Dorsolateral prefrontal cortex (tissue), 120 donors: ENCODE measurements at regions of chrX and their contacts with region 1.

Region 1: DNA sequence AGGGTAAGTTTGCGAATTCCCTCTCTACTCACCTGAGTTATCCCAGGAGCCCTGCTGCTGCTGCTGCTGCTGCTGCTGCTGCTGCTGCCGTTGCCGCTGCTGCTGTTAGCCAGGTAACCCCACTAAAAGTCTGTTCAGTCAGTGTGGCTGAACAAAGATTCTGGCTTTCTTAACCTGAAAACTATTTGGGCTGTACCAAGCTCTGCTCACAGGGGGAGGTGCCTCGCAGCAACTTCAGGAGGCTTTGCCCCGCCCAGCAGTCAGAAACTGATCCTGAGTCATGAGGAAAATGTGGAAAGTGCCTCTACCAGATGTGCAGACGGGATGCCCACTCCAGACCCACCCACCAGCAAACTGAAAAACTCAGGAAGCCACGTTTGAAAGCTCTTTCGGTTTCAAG is at the start of gene CAPN6:
- DNase-seq: no peak
- H3K4me3 ChIP-seq: no peak within 1 kb of the TSS
- H3K27ac ChIP-seq: no peak within 1 kb of the TSS
- H3K27me3 ChIP-seq: peaks cover 0 to 98% (median 58%) of the 10 kb centered on the region in 45 donors
- CTCF ChIP-seq: no peak
- total RNA-seq, gene CAPN6: 0.12 to 0.23 (median 0.15) TPM in 10 of 120 experiments, not detected in the others

Region 2: DNA sequence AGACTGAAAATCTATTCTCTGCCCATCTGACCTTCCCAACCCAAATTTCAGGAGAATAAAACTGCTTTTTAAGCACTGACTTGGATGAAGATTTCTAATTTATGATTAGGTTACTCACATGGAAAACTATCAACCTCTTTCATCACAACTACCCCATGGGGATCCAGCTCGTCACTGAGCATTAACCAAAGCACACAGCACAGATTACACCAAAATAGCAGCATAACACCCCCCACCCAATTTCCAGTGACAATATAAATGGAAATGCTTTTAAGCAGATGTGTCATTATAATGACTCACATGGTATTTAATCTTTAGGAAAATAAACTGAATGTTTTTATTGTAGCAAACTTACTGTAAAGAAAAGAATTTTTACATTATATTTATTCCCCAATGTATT is 250.8 kb after region 1 on chrX:
- intact Hi-C with region 1: loop called in 1 of 2 experiments (anchors 5 kb)
- DNase-seq: no peak
- H3K4me3 ChIP-seq: no peak overlapping the region
- H3K27ac ChIP-seq: no peak overlapping the region
- H3K27me3 ChIP-seq: peaks cover 0 to 72% (median 24%) of the 10 kb centered on the region in 45 donors
- CTCF ChIP-seq: no peak